ENCODE measurements at regions of chr18 and their contacts with region 1.

Region 1: GRCh38 chr18:62576845-62577512 is 54.2 kb downstream of the ZCCHC2 start:
- DNase-seq: no peak
- H3K4me3 ChIP-seq: no peak overlapping the region
- H3K27ac ChIP-seq: no peak overlapping the region
- H3K4me1 ChIP-seq: peaks cover 7% of the 10 kb centered on the region
- H3K27me3 ChIP-seq: no peaks in the 10 kb centered on the region
- CTCF ChIP-seq: no peak

Region 2: DNA sequence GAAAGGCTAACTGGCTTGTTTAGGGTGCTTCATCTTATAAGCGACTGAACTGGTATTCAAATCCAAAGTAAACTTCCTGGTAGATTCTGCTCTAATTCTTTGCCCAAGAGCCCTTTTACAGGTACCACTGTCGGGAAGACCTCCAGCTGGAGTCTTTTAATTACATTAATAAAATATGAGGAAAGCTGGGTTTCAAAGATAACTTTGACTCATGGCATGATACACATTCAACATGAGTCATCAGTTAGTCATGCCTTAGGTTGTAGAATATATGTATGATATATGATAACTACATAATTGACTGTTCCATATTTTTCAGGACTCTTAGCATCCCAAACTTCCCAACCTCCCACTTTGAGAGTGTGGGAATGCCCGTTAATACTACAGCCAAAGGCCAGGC is 21.8 kb before region 1 on chr18:
- CTCF ChIA-PET with region 1: no interaction called
- dilution Hi-C with region 1: no loop called
- in situ Hi-C with region 1: no loop called
- intact Hi-C with region 1: no loop called
- DNase-seq: peak; percentile 70
- H3K4me3 ChIP-seq: no peak overlapping the region
- H3K27ac ChIP-seq: no peak overlapping the region
- H3K4me1 ChIP-seq: peaks cover 10% of the 10 kb centered on the region
- H3K27me3 ChIP-seq: no peaks in the 10 kb centered on the region
- CTCF ChIP-seq: no peak

Region 3: GRCh38 chr18:62625019-62625418 is 48.0 kb after region 1 on chr18:
- CTCF ChIA-PET with region 1: no interaction called
- dilution Hi-C with region 1: loop called (anchors 5 kb)
- in situ Hi-C with region 1: no loop called
- intact Hi-C with region 1: no loop called
- DNase-seq: no peak
- H3K4me3 ChIP-seq: no peak overlapping the region
- H3K27ac ChIP-seq: no peak overlapping the region
- H3K4me1 ChIP-seq: peaks cover 3% of the 10 kb centered on the region
- H3K27me3 ChIP-seq: no peaks in the 10 kb centered on the region
- CTCF ChIP-seq: no peak

Measured in mammary epithelial cell (primary cell).